GM12878 (cell line): ENCODE measurements at regions of chr10 and their contacts with region 1.

Region 1: GRCh38 chr10:97914837-97915211 is 65.2 kb downstream of the GOLGA7B start:
- DNase-seq: no peak
- ATAC-seq: peak; percentile 99
- H3K4me3 ChIP-seq: no peak overlapping the region
- H3K27ac ChIP-seq: no peak overlapping the region
- H3K4me1 ChIP-seq: no peaks in the 10 kb centered on the region
- H3K27me3 ChIP-seq: peaks cover 0 to 2% of the 10 kb centered on the region in 2 experiments; a peak in 1 of 4 replicates
- CTCF ChIP-seq: peak; percentile 83 to 86 (median 84)
- EP300 ChIP-seq: no peak
- POLR2A ChIP-seq: no peak
- RAD21 ChIP-seq: peak; percentile 90

Region 2: GRCh38 chr10:98028168-98028770 is 113.4 kb after region 1 on chr10:
- CTCF ChIA-PET with region 1: interaction called, 6 read pairs
- POLR2A ChIA-PET with region 1: no interaction called
- RAD21 ChIA-PET with region 1: interaction called, 6 read pairs
- SMC1A ChIA-PET with region 1: interaction called, 5 read pairs
- in situ Hi-C with region 1: no loop called
- intact Hi-C with region 1: loop called (anchors 1 kb)
- DNase-seq: no peak
- ATAC-seq: peak; percentile 88
- H3K4me3 ChIP-seq: no peak overlapping the region
- H3K27ac ChIP-seq: no peak overlapping the region
- H3K4me1 ChIP-seq: no peaks in the 10 kb centered on the region
- H3K27me3 ChIP-seq: peaks cover 6% of the 10 kb centered on the region in 2 experiments
- CTCF ChIP-seq: peak; percentile 76 to 86 (median 82)
- EP300 ChIP-seq: no peak
- POLR2A ChIP-seq: no peak
- RAD21 ChIP-seq: peak; percentile 37

Region 3: DNA sequence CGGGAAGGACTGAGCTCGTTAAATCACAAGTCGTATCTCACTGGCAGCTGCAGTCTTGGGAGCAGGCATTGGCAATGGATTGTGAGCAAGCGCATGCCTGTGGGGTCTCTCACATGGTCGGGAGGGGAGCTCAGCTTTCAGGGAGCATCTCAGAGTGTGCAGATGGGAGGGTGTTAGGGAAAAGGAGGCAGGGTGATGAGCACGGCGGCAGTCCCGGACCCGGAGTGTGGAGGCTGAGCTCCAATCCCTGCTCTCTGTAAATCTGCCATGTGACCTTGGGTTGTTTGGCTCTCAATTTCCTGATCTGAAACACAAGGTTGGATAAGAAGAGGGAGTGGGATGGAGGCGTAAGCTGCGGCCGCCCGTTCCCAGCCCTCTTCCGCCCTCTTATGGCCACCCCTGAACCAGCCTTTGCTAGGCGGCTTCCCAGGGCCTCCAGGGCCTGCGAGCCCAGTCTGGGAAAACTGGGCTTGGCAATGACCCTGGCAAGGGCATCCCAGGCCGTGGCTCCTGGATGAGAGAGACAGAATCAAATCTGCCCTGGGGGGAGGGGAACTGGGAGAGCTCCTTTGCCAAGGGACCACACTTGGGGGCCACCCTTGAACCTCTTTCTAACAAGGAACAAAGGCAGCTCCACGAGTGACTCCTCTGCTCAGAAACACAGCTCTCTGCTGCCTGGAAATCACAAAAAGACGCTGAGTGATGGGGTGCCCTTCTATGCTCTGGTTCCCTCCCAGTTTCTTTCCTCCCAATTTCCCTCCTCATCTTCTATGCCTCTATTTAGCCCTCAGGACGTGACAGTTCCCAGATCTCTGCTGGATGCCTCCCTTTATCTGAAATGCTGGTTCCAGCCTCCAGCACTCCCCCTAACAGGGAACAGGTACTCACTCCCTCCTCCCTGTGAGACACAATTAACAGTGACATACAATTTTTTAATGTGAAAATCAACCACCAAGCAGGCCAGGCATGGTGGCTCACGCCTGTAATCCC is 394.8 kb after region 1 on chr10:
- CTCF ChIA-PET with region 1: interaction called, 9 read pairs
- POLR2A ChIA-PET with region 1: no interaction called
- RAD21 ChIA-PET with region 1: interaction called, 4 read pairs
- SMC1A ChIA-PET with region 1: interaction called, 3 read pairs
- in situ Hi-C with region 1: no loop called
- intact Hi-C with region 1: loop called (anchors 1 kb)
- DNase-seq: no peak
- ATAC-seq: peak; percentile 82
- H3K4me3 ChIP-seq: no peak overlapping the region
- H3K27ac ChIP-seq: no peak overlapping the region
- H3K4me1 ChIP-seq: no peaks in the 10 kb centered on the region
- H3K27me3 ChIP-seq: peaks cover 2% of the 10 kb centered on the region in 2 experiments
- CTCF ChIP-seq: peak; percentile 59 to 66 (median 63)
- EP300 ChIP-seq: no peak
- POLR2A ChIP-seq: no peak
- RAD21 ChIP-seq: peak; percentile 66

Region 4: DNA sequence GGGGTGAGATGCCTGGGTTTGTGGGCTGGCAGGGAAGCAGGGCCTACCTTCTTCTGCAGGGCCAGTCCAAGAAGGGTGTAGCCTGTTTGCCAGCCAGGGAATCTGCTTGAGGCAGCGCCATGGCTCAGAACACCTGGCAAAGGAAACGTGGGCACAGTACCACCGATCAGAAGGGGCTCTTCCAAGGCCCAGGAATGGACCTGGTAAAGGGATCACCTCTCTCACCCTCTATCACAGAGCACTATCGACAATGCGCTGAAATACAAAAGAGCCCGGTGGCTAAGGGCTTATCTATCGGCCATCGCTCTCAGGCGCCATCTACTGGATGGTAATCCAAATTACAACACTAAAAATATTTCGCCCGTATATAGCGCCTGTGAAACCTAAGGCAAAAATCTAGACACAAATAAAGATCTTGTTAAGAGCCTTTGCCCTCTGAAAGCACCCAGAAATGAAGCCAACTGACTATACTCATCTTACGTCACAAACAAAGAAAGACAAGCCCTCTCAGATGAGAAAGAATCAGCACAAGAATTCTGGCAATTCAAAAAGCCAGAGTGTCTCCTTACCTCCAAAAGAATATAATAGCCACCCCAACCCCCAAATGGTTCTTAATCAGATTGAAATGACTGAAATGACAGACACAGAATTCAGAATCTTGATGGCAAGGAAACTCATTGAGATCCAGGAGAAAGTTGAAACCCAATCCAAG is 749.7 kb after region 1 on chr10:
- CTCF ChIA-PET with region 1: no interaction called
- POLR2A ChIA-PET with region 1: no interaction called
- RAD21 ChIA-PET with region 1: no interaction called
- SMC1A ChIA-PET with region 1: no interaction called
- in situ Hi-C with region 1: no loop called
- intact Hi-C with region 1: loop called (anchors 10 kb)
- DNase-seq: peak; percentile 3
- ATAC-seq: peak; percentile 86
- H3K4me3 ChIP-seq: no peak overlapping the region
- H3K27ac ChIP-seq: no peak overlapping the region
- H3K4me1 ChIP-seq: no peaks in the 10 kb centered on the region
- H3K27me3 ChIP-seq: peaks cover 0 to 3% of the 10 kb centered on the region in 2 experiments; a peak in 1 of 4 replicates
- CTCF ChIP-seq: peak; percentile 59 to 69 (median 61)
- EP300 ChIP-seq: no peak
- POLR2A ChIP-seq: no peak
- RAD21 ChIP-seq: peak; percentile 79